PC-3 (cell line): ENCODE measurements at regions of chr20 and their contacts with region 1.

Region 1: GRCh38 chr20:11020712-11021111 is 346.9 kb upstream of the JAG1 start:
- DNase-seq: peak; percentile 49
- ATAC-seq: peak; percentile 85
- H3K4me3 ChIP-seq: no peak overlapping the region
- H3K27ac ChIP-seq: 0 out of 2 replicates have a peak overlapping the region, but pooled peaks have one; percentile 4
- H3K4me1 ChIP-seq: peaks cover 12% of the 10 kb centered on the region; the same call in 1 of the 2 replicates
- H3K27me3 ChIP-seq: no peaks in the 10 kb centered on the region
- CTCF ChIP-seq: no peak

Region 2: GRCh38 chr20:10848810-10849370 is 171.8 kb before region 1 on chr20:
- CTCF ChIA-PET with region 1: no interaction called
- POLR2A ChIA-PET with region 1: no interaction called
- intact Hi-C with region 1: loop called (anchors 1 kb)
- DNase-seq: peak; percentile 95
- ATAC-seq: peak; percentile 92
- H3K4me3 ChIP-seq: no peak overlapping the region; the same call in 1 of the 2 replicates
- H3K27ac ChIP-seq: peak overlapping the region; percentile 86
- H3K4me1 ChIP-seq: peaks cover 16% of the 10 kb centered on the region
- H3K27me3 ChIP-seq: no peaks in the 10 kb centered on the region
- CTCF ChIP-seq: no peak

Region 3: DNA sequence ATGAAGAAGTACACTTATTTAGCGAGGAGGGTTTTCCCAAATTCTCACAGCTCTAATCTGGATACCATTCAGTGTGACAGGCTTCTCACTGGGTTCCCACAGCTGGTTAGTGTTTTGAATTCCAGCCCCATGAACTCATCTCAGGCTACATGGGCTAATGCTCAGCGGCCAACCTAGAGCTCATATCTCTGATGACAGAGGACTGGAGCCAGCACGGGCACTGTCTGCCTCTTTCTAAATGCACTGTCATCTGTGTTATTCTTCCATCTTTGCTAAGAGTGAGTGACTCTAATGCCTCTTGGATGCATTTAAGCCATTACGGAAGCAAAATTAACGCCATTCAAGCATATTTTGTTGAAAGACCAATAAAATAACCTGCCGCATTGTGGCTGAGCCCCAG is 38.0 kb before region 1 on chr20:
- CTCF ChIA-PET with region 1: no interaction called
- POLR2A ChIA-PET with region 1: no interaction called
- intact Hi-C with region 1: loop called (anchors 1 kb)
- DNase-seq: peak; percentile 72
- ATAC-seq: peak; percentile 95
- H3K4me3 ChIP-seq: no peak overlapping the region
- H3K27ac ChIP-seq: no peak overlapping the region
- H3K4me1 ChIP-seq: peaks cover 12% of the 10 kb centered on the region; the same call in 1 of the 2 replicates
- H3K27me3 ChIP-seq: no peaks in the 10 kb centered on the region
- CTCF ChIP-seq: no peak

Region 4: DNA sequence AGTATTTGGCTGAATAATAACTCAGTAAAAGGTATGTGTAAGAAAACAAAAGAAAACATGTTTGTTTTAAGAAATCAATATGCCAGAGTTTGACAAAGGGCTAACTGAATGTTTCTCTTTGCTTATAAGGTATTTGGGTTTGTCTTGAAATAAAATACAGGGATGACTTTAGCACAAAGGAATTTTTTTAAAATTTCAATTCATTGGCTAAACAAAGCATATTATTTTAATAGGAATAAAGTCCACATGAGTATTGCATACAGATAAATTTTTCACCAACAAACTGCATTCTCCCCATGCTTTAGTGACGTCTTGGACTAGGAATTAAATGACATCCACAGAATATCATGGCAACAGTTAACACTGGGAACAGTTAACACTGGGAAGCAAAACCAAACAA is 133.1 kb after region 1 on chr20:
- CTCF ChIA-PET with region 1: no interaction called
- POLR2A ChIA-PET with region 1: no interaction called
- intact Hi-C with region 1: loop called (anchors 2 kb)
- DNase-seq: peak; percentile 82
- ATAC-seq: peak; percentile 70
- H3K4me3 ChIP-seq: no peak overlapping the region
- H3K27ac ChIP-seq: peak overlapping the region; percentile 63
- H3K4me1 ChIP-seq: peaks cover 49% of the 10 kb centered on the region
- H3K27me3 ChIP-seq: no peaks in the 10 kb centered on the region
- CTCF ChIP-seq: no peak